ENCODE measurements at regions of chr12 and their contacts with region 1.

Region 1: DNA sequence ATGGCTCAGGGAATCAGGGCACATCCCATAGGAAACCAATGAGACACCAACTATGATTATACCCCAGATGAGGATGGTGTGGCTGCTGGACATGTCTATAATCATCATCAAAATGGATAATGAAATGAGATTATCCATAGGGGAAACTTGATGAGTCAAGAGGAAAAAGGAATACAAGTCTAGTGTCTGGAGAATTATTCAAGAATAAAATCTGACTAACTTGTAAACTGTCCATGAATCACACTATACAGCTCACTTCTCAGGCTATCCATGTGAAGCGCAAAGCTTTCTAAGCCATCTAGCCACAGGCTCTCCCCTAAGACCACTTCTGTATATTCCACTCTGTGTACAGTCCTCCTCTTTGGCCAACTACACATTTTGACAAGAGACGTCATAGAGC is 52.5 kb downstream of the DUSP16 start:
- DNase-seq: no peak
- ATAC-seq: no peak
- H3K4me3 ChIP-seq: no peak overlapping the region
- H3K4me3 Mint-ChIP-seq: no peak overlapping the region
- H3K27ac ChIP-seq: no peak overlapping the region
- H3K27ac Mint-ChIP-seq: no peak overlapping the region
- H3K4me1 ChIP-seq: peaks cover 20% of the 10 kb centered on the region
- H3K4me1 Mint-ChIP-seq: peaks cover 48% of the 10 kb centered on the region
- H3K27me3 ChIP-seq: no peaks in the 10 kb centered on the region
- H3K27me3 Mint-ChIP-seq: no peaks in the 10 kb centered on the region
- CTCF ChIP-seq: no peak

Region 2: GRCh38 chr12:12334367-12335040 is 175.6 kb before region 1 on chr12:
- CTCF ChIA-PET with region 1: no interaction called
- POLR2A ChIA-PET with region 1: no interaction called
- intact Hi-C with region 1: no loop called
- DNase-seq: peak; percentile 32 to 83 (median 48)
- ATAC-seq: peak; percentile 71
- H3K4me3 ChIP-seq: no peak overlapping the region
- H3K4me3 Mint-ChIP-seq: no peak overlapping the region
- H3K27ac ChIP-seq: no peak overlapping the region
- H3K27ac Mint-ChIP-seq: no peak overlapping the region
- H3K4me1 ChIP-seq: peaks cover 15% of the 10 kb centered on the region
- H3K4me1 Mint-ChIP-seq: peaks cover 28% of the 10 kb centered on the region
- H3K27me3 ChIP-seq: no peaks in the 10 kb centered on the region
- H3K27me3 Mint-ChIP-seq: no peaks in the 10 kb centered on the region
- CTCF ChIP-seq: peak; percentile 96

Region 3: GRCh38 chr12:12546314-12546772 is 36.2 kb after region 1 on chr12:
- CTCF ChIA-PET with region 1: interaction called, 3 read pairs
- POLR2A ChIA-PET with region 1: no interaction called
- intact Hi-C with region 1: loop called (anchors 5 kb)
- DNase-seq: no peak
- ATAC-seq: no peak
- H3K4me3 ChIP-seq: no peak overlapping the region
- H3K4me3 Mint-ChIP-seq: no peak overlapping the region
- H3K27ac ChIP-seq: no peak overlapping the region
- H3K27ac Mint-ChIP-seq: no peak overlapping the region
- H3K4me1 ChIP-seq: no peaks in the 10 kb centered on the region
- H3K4me1 Mint-ChIP-seq: peaks cover 56% of the 10 kb centered on the region
- H3K27me3 ChIP-seq: no peaks in the 10 kb centered on the region
- H3K27me3 Mint-ChIP-seq: no peaks in the 10 kb centered on the region
- CTCF ChIP-seq: no peak